PC-9 (cell line): ENCODE measurements at regions of chr10 and their contacts with region 1.

Region 1: GRCh38 chr10:34637418-34637911 is 177.6 kb downstream of the PARD3 start:
- DNase-seq: peak in 1 of 2 experiments; percentile 56
- H3K4me3 ChIP-seq: no peak overlapping the region
- H3K27ac ChIP-seq: no peak overlapping the region
- H3K4me1 ChIP-seq: peaks cover 5% of the 10 kb centered on the region; the same call in 1 of the 2 replicates
- H3K27me3 ChIP-seq: no peaks in the 10 kb centered on the region
- CTCF ChIP-seq: peak; percentile 94

Region 2: GRCh38 chr10:32795598-32796183 is 1841.8 kb before region 1 on chr10:
- CTCF ChIA-PET with region 1: no interaction called
- POLR2A ChIA-PET with region 1: no interaction called
- intact Hi-C with region 1: loop called (anchors 5 kb)
- DNase-seq: peak in 1 of 2 experiments; percentile 7
- H3K4me3 ChIP-seq: no peak overlapping the region
- H3K27ac ChIP-seq: no peak overlapping the region
- H3K4me1 ChIP-seq: no peaks in the 10 kb centered on the region
- H3K27me3 ChIP-seq: no peaks in the 10 kb centered on the region
- CTCF ChIP-seq: peak; percentile 77

Region 3: DNA sequence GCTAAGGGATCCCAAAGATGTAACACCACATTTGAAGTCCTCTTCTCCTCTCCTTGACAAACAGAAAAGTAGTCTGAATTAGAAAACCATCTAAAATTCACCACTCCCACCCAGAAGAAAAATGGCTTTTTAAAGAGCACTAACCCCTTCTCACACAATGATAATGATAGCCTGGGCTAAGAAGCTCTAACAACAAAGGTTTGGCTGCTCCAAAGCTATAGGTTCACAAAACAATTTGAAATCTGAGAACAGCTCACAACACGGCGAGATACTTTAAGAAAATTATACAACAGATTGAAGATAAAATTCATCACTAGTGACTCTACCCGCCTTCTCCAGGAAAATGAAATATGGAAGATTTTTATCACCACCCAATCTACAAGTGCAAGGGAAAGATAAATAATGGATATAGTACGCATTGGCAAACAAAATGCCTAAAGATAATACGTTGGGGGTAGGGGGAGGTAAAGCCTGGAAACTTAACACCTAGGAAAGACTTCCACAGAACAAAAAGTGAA is 1686.8 kb before region 1 on chr10:
- CTCF ChIA-PET with region 1: no interaction called
- POLR2A ChIA-PET with region 1: interaction called, 14 read pairs
- intact Hi-C with region 1: no loop called
- DNase-seq: no peak
- H3K4me3 ChIP-seq: no peak overlapping the region; the same call in 1 of the 2 replicates
- H3K27ac ChIP-seq: no peak overlapping the region
- H3K4me1 ChIP-seq: peaks cover 53% of the 10 kb centered on the region
- H3K27me3 ChIP-seq: no peaks in the 10 kb centered on the region
- CTCF ChIP-seq: no peak

Region 4: DNA sequence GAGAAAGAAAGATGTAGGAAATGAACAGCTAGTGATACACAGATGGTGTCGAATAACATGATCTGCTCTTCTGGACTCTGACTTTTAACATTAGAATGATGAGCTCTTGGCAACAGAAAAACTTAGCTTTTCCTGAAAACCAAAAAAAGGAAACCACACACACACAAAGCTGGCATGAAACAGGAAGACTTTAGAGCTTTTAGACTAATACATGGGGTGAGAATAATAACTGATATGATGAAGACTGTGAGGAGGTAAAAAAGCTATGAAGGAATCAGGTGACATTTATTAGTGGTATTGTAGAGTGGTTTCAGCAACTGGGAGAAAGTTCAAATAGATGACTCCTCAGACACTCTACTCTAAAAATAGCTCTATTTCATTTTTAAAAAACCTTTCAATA is 314.3 kb before region 1 on chr10:
- CTCF ChIA-PET with region 1: interaction called, 3 read pairs
- POLR2A ChIA-PET with region 1: no interaction called
- intact Hi-C with region 1: loop called (anchors 10 kb)
- DNase-seq: no peak
- H3K4me3 ChIP-seq: no peak overlapping the region
- H3K27ac ChIP-seq: peak overlapping the region; percentile 37; the same call in 1 of the 2 replicates
- H3K4me1 ChIP-seq: peaks cover 38% of the 10 kb centered on the region
- H3K27me3 ChIP-seq: no peaks in the 10 kb centered on the region
- CTCF ChIP-seq: no peak

Region 5: GRCh38 chr10:34528320-34528719 is 109.1 kb before region 1 on chr10:
- CTCF ChIA-PET with region 1: no interaction called
- POLR2A ChIA-PET with region 1: no interaction called
- intact Hi-C with region 1: loop called (anchors 2 kb)
- DNase-seq: peak; percentile 74 to 94
- H3K4me3 ChIP-seq: peak overlapping the region; percentile 26; the same call in 1 of the 2 replicates
- H3K27ac ChIP-seq: peak overlapping the region; percentile 68
- H3K4me1 ChIP-seq: peaks cover 33% of the 10 kb centered on the region
- H3K27me3 ChIP-seq: no peaks in the 10 kb centered on the region
- CTCF ChIP-seq: no peak

Region 6: GRCh38 chr10:36542493-36542892 is 1905.0 kb after region 1 on chr10:
- CTCF ChIA-PET with region 1: no interaction called
- POLR2A ChIA-PET with region 1: no interaction called
- intact Hi-C with region 1: no loop called
- DNase-seq: no peak
- H3K4me3 ChIP-seq: no peak overlapping the region
- H3K27ac ChIP-seq: no peak overlapping the region
- H3K4me1 ChIP-seq: no peaks in the 10 kb centered on the region
- H3K27me3 ChIP-seq: no peaks in the 10 kb centered on the region
- CTCF ChIP-seq: no peak